ENCODE measurements at regions of chrX and their contacts with region 1.

Region 1: DNA sequence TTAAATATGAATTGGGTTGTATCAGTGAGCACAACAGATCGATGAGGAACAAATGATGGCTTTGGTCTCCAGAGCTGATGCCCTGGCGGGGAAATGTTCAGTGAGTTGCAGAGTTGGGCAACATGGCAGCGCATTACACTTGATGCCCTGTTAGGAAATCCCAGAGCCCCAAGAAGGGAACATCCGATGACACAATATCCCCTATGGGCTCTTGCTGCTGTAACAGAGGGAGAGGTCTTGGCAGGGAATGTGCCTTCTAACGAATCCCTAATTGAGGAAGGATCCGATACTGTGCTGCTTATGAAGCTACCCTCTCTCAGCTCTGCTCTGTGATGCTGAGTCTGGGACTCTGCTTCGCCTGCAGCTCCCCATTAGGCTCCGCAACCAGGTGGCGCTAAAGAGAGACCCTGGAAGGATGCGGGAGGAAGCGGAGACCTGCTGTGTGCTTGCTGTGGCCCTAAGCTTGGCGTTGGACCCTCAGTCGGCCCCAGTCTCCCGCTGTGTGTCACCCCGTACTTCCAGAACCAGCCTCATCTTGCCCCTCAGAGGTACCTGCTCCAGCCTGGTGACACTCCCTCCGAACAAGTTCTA is 38.9 kb downstream of the PDHA1 start:
- DNase-seq: peak in 4 of 5 donors; percentile 11 to 48 (median 36)
- ATAC-seq: peak in 3 of 4 donors; percentile 53 to 74 (median 61)
- H3K4me3 ChIP-seq: no peak overlapping the region
- H3K27ac ChIP-seq: no peak overlapping the region
- H3K4me1 ChIP-seq: no peaks in the 10 kb centered on the region
- H3K27me3 ChIP-seq: peaks cover 0 to 4% (median 0%) of the 10 kb centered on the region in 9 donors
- CTCF ChIP-seq: peak; percentile 19 to 61 (median 41)
- POLR2A ChIP-seq: no peak

Region 2: DNA sequence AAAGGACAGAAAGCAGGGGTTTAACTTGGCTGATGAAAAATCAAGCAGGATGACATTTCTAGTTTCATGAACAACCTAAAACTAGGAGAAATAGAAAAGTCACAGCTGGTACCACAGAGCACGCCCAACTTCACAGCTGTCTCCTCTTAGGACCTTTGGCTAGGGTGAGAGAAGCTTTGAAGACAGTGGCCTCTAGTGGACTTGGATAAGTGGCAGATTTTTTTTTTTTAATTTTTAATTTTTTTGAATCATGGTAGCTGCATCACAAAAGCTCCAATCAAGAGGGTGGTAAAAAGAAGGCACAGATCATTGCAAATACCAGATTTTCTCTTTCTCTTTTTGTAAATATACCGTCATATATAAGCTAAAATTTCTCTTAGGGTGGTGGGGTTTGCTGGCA is 152.8 kb after region 1 on chrX:
- intact Hi-C with region 1: loop called in 7 of 10 experiments (anchors 5 to 10 kb)
- DNase-seq: no peak
- ATAC-seq: no peak
- H3K4me3 ChIP-seq: no peak overlapping the region
- H3K27ac ChIP-seq: no peak overlapping the region
- H3K4me1 ChIP-seq: no peaks in the 10 kb centered on the region
- H3K27me3 ChIP-seq: peaks cover 0 to 5% (median 0%) of the 10 kb centered on the region in 9 donors
- CTCF ChIP-seq: peak in 5 of 12 donors; percentile 18 to 32 (median 27)
- POLR2A ChIP-seq: no peak